HepG2 (cell line): ENCODE measurements at regions of chr1 and their contacts with region 1.

Region 1: GRCh38 chr1:41432481-41433280 is 51.8 kb downstream of the EDN2 start:
- DNase-seq: peak; percentile 68
- ATAC-seq: peak; percentile 98
- H3K4me3 ChIP-seq: peak overlapping the region in 1 of 3 experiments; percentile 42; a peak in 1 of 6 replicates
- H3K27ac ChIP-seq: no peak overlapping the region
- H3K4me1 ChIP-seq: peaks cover 4% of the 10 kb centered on the region; the same call in 1 of the 2 replicates
- H3K27me3 ChIP-seq: peaks cover 0 to 8% of the 10 kb centered on the region in 2 experiments; a peak in 3 of 5 replicates
- CTCF ChIP-seq: peak; percentile 98
- EP300 ChIP-seq: no peak
- POLR2A ChIP-seq: no peak
- RAD21 ChIP-seq: peak; percentile 93

Region 2: GRCh38 chr1:41268154-41268770 is 164.4 kb before region 1 on chr1:
- CTCF ChIA-PET with region 1: interaction called, 14 read pairs
- POLR2A ChIA-PET with region 1: no interaction called
- in situ Hi-C with region 1: no loop called
- intact Hi-C with region 1: loop called (anchors 1 kb)
- DNase-seq: peak; percentile 35
- ATAC-seq: peak; percentile 88
- H3K4me3 ChIP-seq: no peak overlapping the region
- H3K27ac ChIP-seq: no peak overlapping the region
- H3K4me1 ChIP-seq: no peaks in the 10 kb centered on the region
- H3K27me3 ChIP-seq: no peaks in the 10 kb centered on the region
- CTCF ChIP-seq: peak; percentile 94
- EP300 ChIP-seq: no peak
- POLR2A ChIP-seq: no peak
- RAD21 ChIP-seq: peak; percentile 91

Region 3: GRCh38 chr1:41282679-41283317 is 149.9 kb before region 1 on chr1:
- CTCF ChIA-PET with region 1: interaction called, 10 read pairs
- POLR2A ChIA-PET with region 1: no interaction called
- in situ Hi-C with region 1: loop called (anchors 5 kb)
- intact Hi-C with region 1: no loop called
- DNase-seq: peak; percentile 14
- ATAC-seq: peak; percentile 89
- H3K4me3 ChIP-seq: no peak overlapping the region
- H3K27ac ChIP-seq: no peak overlapping the region
- H3K4me1 ChIP-seq: no peaks in the 10 kb centered on the region
- H3K27me3 ChIP-seq: peaks cover 2 to 24% of the 10 kb centered on the region in 2 experiments; a peak in 2 of 5 replicates
- CTCF ChIP-seq: peak; percentile 89
- EP300 ChIP-seq: no peak
- POLR2A ChIP-seq: no peak
- RAD21 ChIP-seq: peak; percentile 55; the same call in 1 of the 2 replicates

Region 4: DNA sequence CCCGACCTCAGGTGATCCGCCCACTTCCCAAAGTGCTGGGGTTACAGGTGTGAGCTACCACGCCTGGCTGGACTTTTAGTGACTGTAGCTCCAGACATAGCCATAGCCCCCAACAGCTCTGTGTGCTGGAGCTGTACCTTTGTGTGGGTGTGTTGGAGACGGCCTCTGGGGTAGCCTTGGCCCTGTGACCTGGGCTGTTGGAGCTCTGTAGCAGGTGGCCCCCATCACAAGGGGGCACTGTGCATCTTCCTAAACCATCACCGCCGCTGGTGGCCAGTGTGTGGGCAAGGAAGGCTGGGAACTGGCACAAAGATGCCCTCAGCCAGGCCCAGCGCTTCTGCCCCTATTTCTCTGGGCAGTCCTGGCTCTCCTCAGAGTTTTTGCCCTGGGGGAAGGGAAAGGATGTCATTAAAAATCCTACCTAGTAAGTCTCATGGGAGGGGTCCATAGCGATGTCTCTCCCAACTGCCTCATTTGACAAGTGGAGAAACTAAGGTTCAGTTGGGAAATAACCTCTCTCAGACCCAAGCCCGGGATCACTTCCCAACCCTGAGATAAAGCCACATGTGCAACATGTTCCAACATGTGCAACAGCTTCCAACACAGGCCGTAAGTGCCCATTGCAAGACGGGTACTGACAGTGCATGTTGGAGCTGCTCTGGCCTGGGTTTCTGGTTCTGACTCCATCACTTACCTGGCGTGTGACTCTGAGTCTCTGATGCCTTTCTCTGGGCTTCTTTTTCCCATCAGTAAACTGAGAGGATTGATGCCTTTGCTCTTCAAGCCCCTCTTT is 109.7 kb before region 1 on chr1:
- CTCF ChIA-PET with region 1: interaction called, 11 read pairs
- POLR2A ChIA-PET with region 1: no interaction called
- in situ Hi-C with region 1: loop called (anchors 5 kb)
- intact Hi-C with region 1: loop called (anchors 2 kb)
- DNase-seq: peak; percentile 46
- ATAC-seq: peak; percentile 96
- H3K4me3 ChIP-seq: no peak overlapping the region
- H3K27ac ChIP-seq: no peak overlapping the region
- H3K4me1 ChIP-seq: no peaks in the 10 kb centered on the region
- H3K27me3 ChIP-seq: peaks cover 0 to 4% of the 10 kb centered on the region in 2 experiments; a peak in 2 of 5 replicates
- CTCF ChIP-seq: peak; percentile 85
- EP300 ChIP-seq: no peak
- POLR2A ChIP-seq: no peak
- RAD21 ChIP-seq: peak; percentile 83